MCF 10A (cell line): ENCODE measurements at regions of chr20 and their contacts with region 1.

Region 1: GRCh38 chr20:47356526-47357295 is at the start of gene ZMYND8:
- DNase-seq: peak; percentile 94
- H3K4me3 Mint-ChIP-seq: peak within 1 kb of the TSS; percentile 70
- H3K27ac Mint-ChIP-seq: no peak within 1 kb of the TSS
- H3K4me1 Mint-ChIP-seq: peaks cover 72% of the 10 kb centered on the region
- H3K27me3 Mint-ChIP-seq: no peaks in the 10 kb centered on the region
- CTCF ChIP-seq: no peak
- total RNA-seq, gene ZMYND8: 126 and 127 TPM in 2 replicates

Region 2: GRCh38 chr20:46746956-46747526 is 609.7 kb before region 1 on chr20:
- CTCF ChIA-PET with region 1: no interaction called
- POLR2A ChIA-PET with region 1: no interaction called
- intact Hi-C with region 1: no loop called
- DNase-seq: peak; percentile 15
- H3K4me3 Mint-ChIP-seq: no peak overlapping the region
- H3K27ac Mint-ChIP-seq: no peak overlapping the region
- H3K4me1 Mint-ChIP-seq: peaks cover 9% of the 10 kb centered on the region
- H3K27me3 Mint-ChIP-seq: peaks cover 29% of the 10 kb centered on the region
- CTCF ChIP-seq: no peak

Region 3: DNA sequence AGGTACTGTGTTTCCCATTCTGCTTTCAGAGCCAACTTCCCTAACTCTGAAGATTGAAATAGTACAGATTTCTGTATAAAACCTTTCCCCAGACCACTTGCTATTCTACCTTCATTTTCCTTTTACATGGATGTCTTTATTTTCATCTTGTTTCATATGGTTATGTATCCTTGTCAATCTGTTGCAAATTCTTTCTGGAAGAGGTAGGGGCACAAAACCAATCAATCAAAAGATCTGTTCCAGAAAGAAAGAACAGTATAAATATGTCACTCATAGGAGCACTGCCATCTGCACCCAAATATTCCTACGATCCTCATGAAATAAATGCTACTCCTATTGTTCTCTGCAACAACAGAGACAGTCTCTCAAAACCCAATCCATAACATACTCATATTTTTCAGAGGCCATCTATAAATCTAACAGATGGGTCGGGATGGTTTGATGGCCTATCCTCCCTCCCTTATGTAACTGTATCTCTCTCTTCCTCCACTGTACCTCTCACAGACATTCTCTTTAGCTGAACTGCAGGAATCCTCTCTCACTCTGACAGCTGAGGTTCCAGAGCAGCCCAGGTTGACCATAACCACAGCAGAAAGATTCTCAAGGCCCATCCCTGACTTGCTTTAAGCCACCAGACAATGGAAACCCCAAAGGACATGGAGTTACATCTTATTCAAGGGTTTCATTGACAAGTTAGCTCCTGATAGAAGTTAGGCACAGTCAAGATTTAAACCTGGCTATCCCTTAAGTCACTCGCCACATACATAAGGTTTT is 113.0 kb before region 1 on chr20:
- CTCF ChIA-PET with region 1: no interaction called
- POLR2A ChIA-PET with region 1: no interaction called
- intact Hi-C with region 1: no loop called
- DNase-seq: no peak
- H3K4me3 Mint-ChIP-seq: no peak overlapping the region
- H3K27ac Mint-ChIP-seq: peak overlapping the region; percentile 76
- H3K4me1 Mint-ChIP-seq: no peaks in the 10 kb centered on the region
- H3K27me3 Mint-ChIP-seq: no peaks in the 10 kb centered on the region
- CTCF ChIP-seq: no peak

Region 4: DNA sequence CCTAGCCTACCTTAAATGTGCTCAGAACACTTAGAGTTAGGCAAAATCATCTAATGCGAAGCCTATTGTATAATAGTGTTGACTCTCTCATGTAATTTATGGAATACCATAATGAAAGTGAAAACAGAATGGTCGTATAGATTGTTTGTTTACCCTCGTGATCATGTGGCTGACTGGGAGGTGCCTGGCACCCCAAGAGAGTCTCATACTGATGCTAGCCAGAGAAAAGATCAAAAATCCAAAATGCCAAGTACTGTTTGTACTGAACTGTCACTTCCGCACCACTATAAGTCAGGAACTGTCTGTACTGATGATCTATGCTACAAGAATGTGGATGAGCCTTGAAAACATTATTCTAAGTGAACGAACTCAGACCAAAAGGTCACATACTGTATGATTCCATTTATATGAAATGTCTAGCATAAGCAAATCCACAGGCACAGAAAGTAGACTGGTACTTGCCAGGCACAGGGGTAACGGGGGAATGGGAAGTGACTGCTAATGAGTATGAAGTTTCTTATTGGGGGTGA is 22.6 kb before region 1 on chr20:
- CTCF ChIA-PET with region 1: interaction called, 5 read pairs
- POLR2A ChIA-PET with region 1: interaction called, 1,977 read pairs
- intact Hi-C with region 1: loop called (anchors 1 kb)
- DNase-seq: peak; percentile 96
- H3K4me3 Mint-ChIP-seq: peak overlapping the region; percentile 72
- H3K27ac Mint-ChIP-seq: peak overlapping the region; percentile 96
- H3K4me1 Mint-ChIP-seq: peaks cover 67% of the 10 kb centered on the region
- H3K27me3 Mint-ChIP-seq: no peaks in the 10 kb centered on the region
- CTCF ChIP-seq: no peak

Region 5: GRCh38 chr20:47370850-47371676 is 14.4 kb after region 1 on chr20:
- CTCF ChIA-PET with region 1: interaction called, 4 read pairs
- POLR2A ChIA-PET with region 1: interaction called, 307 read pairs
- intact Hi-C with region 1: no loop called
- DNase-seq: peak; percentile 62
- H3K4me3 Mint-ChIP-seq: no peak overlapping the region
- H3K27ac Mint-ChIP-seq: no peak overlapping the region
- H3K4me1 Mint-ChIP-seq: peaks cover 9% of the 10 kb centered on the region
- H3K27me3 Mint-ChIP-seq: no peaks in the 10 kb centered on the region
- CTCF ChIP-seq: no peak

Region 6: DNA sequence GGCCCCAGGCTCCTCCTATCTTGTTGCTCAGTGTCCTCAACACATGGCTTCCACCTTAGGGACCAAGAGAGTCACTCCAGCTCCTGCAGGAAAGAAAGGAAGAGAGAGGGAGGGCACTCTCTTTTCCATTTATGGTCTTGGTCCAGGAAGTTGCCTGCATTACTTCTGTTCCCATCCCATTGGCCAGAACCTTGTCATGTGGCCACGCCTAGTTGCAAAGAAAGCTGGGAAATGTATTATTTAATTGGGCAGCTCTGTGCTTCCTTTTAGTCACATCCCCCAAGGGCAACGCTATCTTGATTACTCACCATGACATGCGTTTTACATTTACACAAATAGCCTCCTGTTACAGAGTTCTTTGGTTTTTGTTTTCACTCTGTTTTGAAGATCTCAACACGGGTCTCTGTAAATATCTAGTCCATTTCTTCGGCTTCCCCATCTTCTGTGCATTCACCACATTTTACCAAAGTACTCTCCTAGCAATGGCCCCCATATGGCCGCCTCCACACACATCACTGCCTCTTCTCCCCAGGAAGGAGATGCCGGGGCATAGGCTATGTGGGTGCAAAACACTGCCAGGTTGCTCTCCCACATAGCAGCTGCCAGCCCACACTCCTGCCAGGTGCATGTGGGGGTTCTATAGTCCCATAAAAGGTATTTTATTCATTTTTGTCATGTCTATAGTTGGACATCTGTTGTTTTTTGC is 35.5 kb after region 1 on chr20:
- CTCF ChIA-PET with region 1: interaction called, 3 read pairs
- POLR2A ChIA-PET with region 1: interaction called, 17 read pairs
- intact Hi-C with region 1: no loop called
- DNase-seq: peak; percentile 97
- H3K4me3 Mint-ChIP-seq: peak overlapping the region; percentile 67
- H3K27ac Mint-ChIP-seq: peak overlapping the region; percentile 98
- H3K4me1 Mint-ChIP-seq: peaks cover 22% of the 10 kb centered on the region
- H3K27me3 Mint-ChIP-seq: no peaks in the 10 kb centered on the region
- CTCF ChIP-seq: no peak

Region 7: DNA sequence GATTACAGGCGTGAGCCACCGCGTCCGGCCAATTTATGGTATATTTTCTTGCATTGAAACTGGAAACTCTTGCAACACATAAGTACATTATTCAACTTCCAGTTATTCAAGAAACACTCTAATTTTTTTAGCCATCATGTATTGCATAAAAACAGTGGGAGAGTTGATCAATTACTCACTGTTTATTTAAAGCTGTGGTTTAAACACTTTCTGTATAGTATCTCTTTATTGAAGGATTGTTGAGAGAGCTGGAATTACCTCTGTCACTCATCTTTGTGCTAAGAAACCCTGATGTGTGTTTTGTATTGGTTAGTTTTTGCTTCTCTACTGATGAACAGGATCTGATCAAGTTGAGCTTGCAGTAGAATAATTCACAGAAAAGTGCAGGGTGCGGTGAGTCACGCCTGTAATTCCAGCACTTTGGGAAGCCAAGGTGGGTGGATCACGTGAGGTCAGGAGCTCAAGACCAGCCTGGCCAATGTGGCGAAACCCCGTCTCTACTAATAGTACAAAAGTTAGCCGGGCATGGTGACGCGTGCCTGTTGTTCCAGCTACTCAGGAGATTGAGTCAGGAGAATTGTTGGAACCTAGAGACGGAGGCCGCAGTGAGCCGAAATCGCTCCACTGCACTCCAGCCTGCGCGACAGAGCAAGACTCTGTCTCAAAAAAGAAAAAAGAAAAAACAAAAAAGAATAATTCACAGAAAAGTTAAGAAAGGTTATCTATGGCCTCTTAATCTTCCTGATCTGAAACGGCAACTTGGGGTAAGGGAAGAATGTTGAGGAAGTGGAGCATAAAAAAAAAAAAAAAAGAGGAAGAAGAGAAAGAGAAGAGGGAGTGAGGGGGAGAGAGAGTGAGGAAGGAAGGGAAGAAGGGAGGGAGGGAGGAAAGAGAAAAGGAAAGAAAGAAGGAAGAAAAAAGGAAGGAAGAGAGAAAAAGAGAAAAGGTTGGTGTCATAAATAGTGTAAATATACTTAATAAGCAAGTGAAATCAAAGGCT is 75.8 kb after region 1 on chr20:
- CTCF ChIA-PET with region 1: interaction called, 3 read pairs
- POLR2A ChIA-PET with region 1: interaction called, 42 read pairs
- intact Hi-C with region 1: no loop called
- DNase-seq: peak; percentile 94
- H3K4me3 Mint-ChIP-seq: peak overlapping the region; percentile 66
- H3K27ac Mint-ChIP-seq: peak overlapping the region; percentile 99
- H3K4me1 Mint-ChIP-seq: peaks cover 27% of the 10 kb centered on the region
- H3K27me3 Mint-ChIP-seq: no peaks in the 10 kb centered on the region
- CTCF ChIP-seq: no peak

Region 8: GRCh38 chr20:47453142-47453782 is 96.6 kb after region 1 on chr20:
- CTCF ChIA-PET with region 1: interaction called, 4 read pairs
- POLR2A ChIA-PET with region 1: interaction called, 97 read pairs
- intact Hi-C with region 1: no loop called
- DNase-seq: peak; percentile 92
- H3K4me3 Mint-ChIP-seq: peak overlapping the region; percentile 45
- H3K27ac Mint-ChIP-seq: peak overlapping the region; percentile 91
- H3K4me1 Mint-ChIP-seq: peaks cover 27% of the 10 kb centered on the region
- H3K27me3 Mint-ChIP-seq: no peaks in the 10 kb centered on the region
- CTCF ChIP-seq: no peak

Region 9: GRCh38 chr20:47606983-47607613 is 250.4 kb after region 1 on chr20:
- CTCF ChIA-PET with region 1: no interaction called
- POLR2A ChIA-PET with region 1: no interaction called
- intact Hi-C with region 1: no loop called
- DNase-seq: peak; percentile 27
- H3K4me3 Mint-ChIP-seq: no peak overlapping the region
- H3K27ac Mint-ChIP-seq: peak overlapping the region; percentile 69
- H3K4me1 Mint-ChIP-seq: peaks cover 35% of the 10 kb centered on the region
- H3K27me3 Mint-ChIP-seq: no peaks in the 10 kb centered on the region
- CTCF ChIP-seq: no peak